WTC11 (cell line): ENCODE measurements at regions of chr16 and their contacts with region 1.

Region 1: GRCh38 chr16:71484006-71484893 is 4.9 kb downstream of the ZNF19 start:
- DNase-seq: peak; percentile 69
- ATAC-seq: peak; percentile 93
- H3K4me3 Mint-ChIP-seq: peak overlapping the region; percentile 79
- H3K27ac Mint-ChIP-seq: peak overlapping the region; percentile 94
- H3K4me1 Mint-ChIP-seq: peaks cover 13% of the 10 kb centered on the region
- H3K27me3 Mint-ChIP-seq: peaks cover 4% of the 10 kb centered on the region
- CTCF ChIP-seq: no peak

Region 2: GRCh38 chr16:71426072-71426879 is 58.0 kb before region 1 on chr16:
- CTCF ChIA-PET with region 1: interaction called, 10 read pairs
- POLR2A ChIA-PET with region 1: no interaction called
- DNase-seq: peak; percentile 94
- ATAC-seq: peak; percentile 96
- H3K4me3 Mint-ChIP-seq: peak overlapping the region; percentile 82
- H3K27ac Mint-ChIP-seq: peak overlapping the region; percentile 95
- H3K4me1 Mint-ChIP-seq: peaks cover 16% of the 10 kb centered on the region
- H3K27me3 Mint-ChIP-seq: peaks cover 53% of the 10 kb centered on the region
- CTCF ChIP-seq: no peak

Region 3: GRCh38 chr16:71442844-71443243 is 41.4 kb before region 1 on chr16:
- CTCF ChIA-PET with region 1: no interaction called
- POLR2A ChIA-PET with region 1: no interaction called
- DNase-seq: no peak
- ATAC-seq: no peak
- H3K4me3 Mint-ChIP-seq: no peak overlapping the region
- H3K27ac Mint-ChIP-seq: no peak overlapping the region
- H3K4me1 Mint-ChIP-seq: peaks cover 7% of the 10 kb centered on the region; the same call in 1 of the 2 replicates
- H3K27me3 Mint-ChIP-seq: peaks cover 15% of the 10 kb centered on the region
- CTCF ChIP-seq: no peak

Region 4: GRCh38 chr16:71461686-71462648 is 22.3 kb before region 1 on chr16 and contains the start of gene ZNF23:
- CTCF ChIA-PET with region 1: interaction called, 8 read pairs
- POLR2A ChIA-PET with region 1: interaction called, 10 read pairs
- DNase-seq: peak; percentile 83
- ATAC-seq: peak; percentile 97
- H3K4me3 Mint-ChIP-seq: peak within 1 kb of the TSS; percentile 96
- H3K27ac Mint-ChIP-seq: peak within 1 kb of the TSS; percentile 89; the same call in 1 of the 2 replicates
- H3K4me1 Mint-ChIP-seq: peaks cover 17% of the 10 kb centered on the region
- H3K27me3 Mint-ChIP-seq: no peaks in the 10 kb centered on the region
- CTCF ChIP-seq: no peak
- total RNA-seq, gene ZNF23: 9.6 to 11.6 TPM (median 10.5 TPM) in 3 replicates

Region 5: GRCh38 chr16:71499775-71500364 is 15.6 kb after region 1 on chr16:
- CTCF ChIA-PET with region 1: interaction called, 42 read pairs
- POLR2A ChIA-PET with region 1: no interaction called
- DNase-seq: peak; percentile 44
- ATAC-seq: peak; percentile 91
- H3K4me3 Mint-ChIP-seq: no peak overlapping the region
- H3K27ac Mint-ChIP-seq: no peak overlapping the region
- H3K4me1 Mint-ChIP-seq: no peaks in the 10 kb centered on the region
- H3K27me3 Mint-ChIP-seq: no peaks in the 10 kb centered on the region; the same call in none of the 2 replicates
- CTCF ChIP-seq: peak; percentile 34

Region 6: GRCh38 chr16:71537643-71538042 is 53.4 kb after region 1 on chr16:
- CTCF ChIA-PET with region 1: interaction called, 17 read pairs
- POLR2A ChIA-PET with region 1: no interaction called
- DNase-seq: peak; percentile 66
- ATAC-seq: peak; percentile 87
- H3K4me3 Mint-ChIP-seq: no peak overlapping the region
- H3K27ac Mint-ChIP-seq: no peak overlapping the region
- H3K4me1 Mint-ChIP-seq: peaks cover 4% of the 10 kb centered on the region; the same call in 1 of the 2 replicates
- H3K27me3 Mint-ChIP-seq: no peaks in the 10 kb centered on the region
- CTCF ChIP-seq: peak; percentile 51; the same call in 1 of the 2 replicates

Region 7: DNA sequence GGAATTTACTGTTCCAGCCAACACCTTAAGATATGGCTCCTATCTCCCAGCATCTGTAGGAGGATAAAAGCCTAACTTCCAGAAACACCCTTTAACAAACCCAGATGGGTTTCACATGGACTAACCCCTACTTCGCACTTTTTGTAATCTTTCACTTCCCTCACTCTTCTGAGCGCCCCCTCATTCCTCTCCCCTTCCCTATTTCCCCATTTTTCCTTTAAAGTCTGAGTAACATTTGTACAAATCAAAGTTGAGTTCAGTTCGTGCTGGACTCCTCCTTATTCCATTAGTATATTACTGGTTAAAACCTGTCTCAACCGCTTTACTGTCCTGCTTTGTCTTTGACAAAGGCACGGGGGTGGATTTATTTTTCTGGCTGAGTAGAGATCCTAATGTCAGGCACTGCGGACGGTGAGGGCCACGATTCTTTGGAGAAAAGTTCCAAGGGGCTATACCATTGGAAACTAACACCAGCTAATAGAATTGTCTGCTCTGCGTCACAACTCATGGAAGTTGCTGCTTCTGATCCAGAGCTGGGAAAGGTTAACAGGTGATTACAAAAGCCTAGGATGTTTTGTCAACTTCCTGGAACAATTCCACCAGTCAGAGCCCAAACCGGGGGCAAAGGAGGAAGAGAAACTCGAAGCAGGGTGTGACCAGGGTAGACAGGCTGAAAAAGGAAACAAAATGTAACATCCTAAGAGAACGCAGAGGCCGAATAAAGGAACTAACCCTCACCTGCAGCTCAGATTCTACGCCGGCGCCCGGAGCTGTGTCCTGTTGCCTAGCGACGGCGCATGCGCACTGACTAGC is 80.1 kb after region 1 on chr16:
- CTCF ChIA-PET with region 1: interaction called, 10 read pairs
- POLR2A ChIA-PET with region 1: no interaction called
- DNase-seq: no peak
- ATAC-seq: peak; percentile 3
- H3K4me3 Mint-ChIP-seq: peak overlapping the region; percentile 85
- H3K27ac Mint-ChIP-seq: peak overlapping the region; percentile 75
- H3K4me1 Mint-ChIP-seq: peaks cover 14% of the 10 kb centered on the region
- H3K27me3 Mint-ChIP-seq: peaks cover 16% of the 10 kb centered on the region
- CTCF ChIP-seq: no peak